B cell (primary cell): ENCODE measurements at regions of chr1 and their contacts with region 1.

Region 1: GRCh38 chr1:51519048-51519864 is at the start of gene EPS15:
- DNase-seq: peak; percentile 88
- ATAC-seq: peak; percentile 75
- H3K4me3 ChIP-seq: peak within 1 kb of the TSS; percentile 65 to 93 (median 78)
- H3K4me3 Mint-ChIP-seq: peak within 1 kb of the TSS; percentile 96
- H3K27ac ChIP-seq: peak within 1 kb of the TSS; percentile 67 to 88
- H3K27ac Mint-ChIP-seq: peak within 1 kb of the TSS; percentile 91
- H3K4me1 ChIP-seq: peaks cover 31 to 38% of the 10 kb centered on the region in 2 donors
- H3K4me1 Mint-ChIP-seq: peaks cover 54% of the 10 kb centered on the region
- H3K27me3 ChIP-seq: no peaks in the 10 kb centered on the region
- H3K27me3 Mint-ChIP-seq: no peaks in the 10 kb centered on the region
- CTCF ChIP-seq: no peak
- total RNA-seq, gene EPS15: 151 and 163 TPM in 2 replicates

Region 2: GRCh38 chr1:50959913-50960844 is 559.1 kb before region 1 on chr1 and contains the start of gene FAF1:
- CTCF ChIA-PET with region 1: no interaction called
- POLR2A ChIA-PET with region 1: no interaction called
- intact Hi-C with region 1: loop called (anchors 10 kb)
- DNase-seq: peak; percentile 99
- ATAC-seq: peak; percentile 92
- H3K4me3 ChIP-seq: peak within 1 kb of the TSS; percentile 69 to 94 (median 78)
- H3K4me3 Mint-ChIP-seq: peak within 1 kb of the TSS; percentile 94
- H3K27ac ChIP-seq: peak within 1 kb of the TSS; percentile 67 to 76
- H3K27ac Mint-ChIP-seq: peak within 1 kb of the TSS; percentile 99
- H3K4me1 ChIP-seq: peaks cover 18 to 19% of the 10 kb centered on the region in 2 donors
- H3K4me1 Mint-ChIP-seq: peaks cover 24% of the 10 kb centered on the region
- H3K27me3 ChIP-seq: no peaks in the 10 kb centered on the region
- H3K27me3 Mint-ChIP-seq: no peaks in the 10 kb centered on the region
- CTCF ChIP-seq: peak; percentile 24
- total RNA-seq, gene FAF1: 58.4 and 61.1 TPM in 2 replicates

Region 3: GRCh38 chr1:51463561-51463960 is 55.7 kb before region 1 on chr1:
- CTCF ChIA-PET with region 1: no interaction called
- POLR2A ChIA-PET with region 1: no interaction called
- intact Hi-C with region 1: loop called (anchors 10 kb)
- DNase-seq: no peak
- ATAC-seq: no peak
- H3K4me3 ChIP-seq: no peak overlapping the region
- H3K4me3 Mint-ChIP-seq: no peak overlapping the region
- H3K27ac ChIP-seq: no peak overlapping the region
- H3K27ac Mint-ChIP-seq: no peak overlapping the region
- H3K4me1 ChIP-seq: no peaks in the 10 kb centered on the region
- H3K4me1 Mint-ChIP-seq: no peaks in the 10 kb centered on the region
- H3K27me3 ChIP-seq: no peaks in the 10 kb centered on the region
- H3K27me3 Mint-ChIP-seq: no peaks in the 10 kb centered on the region
- CTCF ChIP-seq: no peak

Region 4: GRCh38 chr1:51491166-51491981 is 27.9 kb before region 1 on chr1:
- CTCF ChIA-PET with region 1: interaction called, 5 read pairs
- POLR2A ChIA-PET with region 1: interaction called, 8 read pairs
- intact Hi-C with region 1: loop called (anchors 1 kb)
- DNase-seq: peak; percentile 64
- ATAC-seq: peak; percentile 74
- H3K4me3 ChIP-seq: peak overlapping the region in 1 of 5 experiments; percentile 55
- H3K4me3 Mint-ChIP-seq: peak overlapping the region; percentile 83
- H3K27ac ChIP-seq: peak overlapping the region; percentile 67 to 84
- H3K27ac Mint-ChIP-seq: peak overlapping the region; percentile 88
- H3K4me1 ChIP-seq: peaks cover 52 to 53% of the 10 kb centered on the region in 2 donors
- H3K4me1 Mint-ChIP-seq: peaks cover 61% of the 10 kb centered on the region
- H3K27me3 ChIP-seq: no peaks in the 10 kb centered on the region
- H3K27me3 Mint-ChIP-seq: no peaks in the 10 kb centered on the region
- CTCF ChIP-seq: no peak

Region 5: DNA sequence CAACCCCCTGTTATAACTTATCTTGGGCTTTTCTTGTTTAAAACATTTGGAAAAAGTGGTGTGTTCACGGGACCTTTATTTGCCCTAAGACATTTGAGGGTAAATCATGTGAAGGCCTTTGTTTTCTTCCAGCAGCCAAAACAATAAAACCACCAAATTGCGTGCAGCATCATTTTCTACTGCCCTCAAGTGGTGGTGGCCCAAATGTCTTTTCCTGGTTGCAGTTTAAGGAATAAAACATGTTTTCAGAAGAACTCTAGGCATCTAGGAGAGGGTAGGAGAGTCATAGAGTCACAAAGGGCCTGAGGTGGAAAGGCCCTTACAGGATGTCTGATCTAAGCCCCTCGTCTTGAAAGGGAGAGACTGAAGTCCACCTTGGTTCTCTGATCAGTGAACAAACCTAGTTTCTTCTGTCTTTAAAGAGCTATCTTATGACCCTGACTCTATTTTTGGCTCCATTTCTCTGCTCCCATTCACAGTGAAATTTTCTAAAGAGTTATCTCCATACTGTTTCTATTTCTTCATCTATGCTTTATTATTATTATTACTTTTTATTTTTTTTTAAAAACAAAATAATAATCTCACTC is 15.8 kb after region 1 on chr1:
- CTCF ChIA-PET with region 1: interaction called, 21 read pairs
- POLR2A ChIA-PET with region 1: interaction called, 3 read pairs
- intact Hi-C with region 1: no loop called
- DNase-seq: peak; percentile 59
- ATAC-seq: peak; percentile 43
- H3K4me3 ChIP-seq: no peak overlapping the region
- H3K4me3 Mint-ChIP-seq: no peak overlapping the region
- H3K27ac ChIP-seq: no peak overlapping the region
- H3K27ac Mint-ChIP-seq: peak overlapping the region; percentile 39
- H3K4me1 ChIP-seq: peaks cover 0 to 8% of the 10 kb centered on the region in 2 donors
- H3K4me1 Mint-ChIP-seq: peaks cover 14% of the 10 kb centered on the region
- H3K27me3 ChIP-seq: no peaks in the 10 kb centered on the region
- H3K27me3 Mint-ChIP-seq: no peaks in the 10 kb centered on the region
- CTCF ChIP-seq: peak; percentile 70

Region 6: GRCh38 chr1:51729156-51729823 is 210.0 kb after region 1 on chr1:
- CTCF ChIA-PET with region 1: no interaction called
- POLR2A ChIA-PET with region 1: interaction called, 6 read pairs
- intact Hi-C with region 1: loop called (anchors 1 kb)
- DNase-seq: peak; percentile 96
- ATAC-seq: peak; percentile 96
- H3K4me3 ChIP-seq: peak overlapping the region; percentile 72 to 98 (median 89)
- H3K4me3 Mint-ChIP-seq: peak overlapping the region; percentile 91
- H3K27ac ChIP-seq: peak overlapping the region; percentile 56 to 76
- H3K27ac Mint-ChIP-seq: peak overlapping the region; percentile 88
- H3K4me1 ChIP-seq: peaks cover 13 to 20% of the 10 kb centered on the region in 2 donors
- H3K4me1 Mint-ChIP-seq: peaks cover 41% of the 10 kb centered on the region
- H3K27me3 ChIP-seq: no peaks in the 10 kb centered on the region
- H3K27me3 Mint-ChIP-seq: no peaks in the 10 kb centered on the region
- CTCF ChIP-seq: no peak